ENCODE measurements at regions of chr1 and their contacts with region 1.

Region 1: DNA sequence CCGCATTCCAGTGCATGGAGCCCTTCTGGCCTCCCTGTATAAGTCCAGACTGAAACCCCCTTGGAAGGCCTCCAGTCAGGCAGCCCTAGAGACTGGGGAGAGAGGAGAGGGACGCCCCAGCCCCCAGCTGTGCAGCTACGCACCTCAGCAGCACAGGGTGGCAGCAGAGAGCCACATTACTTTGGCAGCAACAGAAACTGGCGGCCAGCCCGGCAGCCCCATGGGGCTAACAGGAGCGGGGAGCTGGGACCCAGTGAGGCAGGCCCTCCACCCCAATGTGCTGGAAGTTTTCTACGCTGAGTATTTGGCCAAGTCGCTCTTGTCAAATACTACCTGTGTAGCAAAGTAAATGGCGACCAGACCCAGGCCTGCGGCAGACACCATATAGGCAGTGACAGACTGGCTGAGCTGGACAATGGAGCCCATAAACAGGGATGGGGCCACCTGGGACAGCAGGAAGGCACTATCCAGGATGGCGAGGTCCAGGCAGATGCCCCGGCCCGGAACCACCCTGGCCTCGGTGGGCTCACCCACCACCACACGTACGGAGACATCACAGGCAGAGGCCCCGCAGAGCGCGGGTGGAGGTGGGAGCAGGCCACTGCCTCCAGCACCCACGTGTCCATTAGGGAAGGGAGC is 21.2 kb downstream of the SLC45A3 start:
- DNase-seq: no peak
- H3K4me3 ChIP-seq: no peak overlapping the region
- CTCF ChIP-seq: peak; percentile 93

Region 2: GRCh38 chr1:205528887-205529825 is 129.9 kb before region 1 on chr1:
- CTCF ChIA-PET with region 1: interaction called, 331 read pairs
- POLR2A ChIA-PET with region 1: no interaction called
- DNase-seq: no peak
- H3K4me3 ChIP-seq: peak overlapping the region; percentile 45
- CTCF ChIP-seq: peak; percentile 93

Region 3: GRCh38 chr1:205600085-205600484 is 59.0 kb before region 1 on chr1:
- CTCF ChIA-PET with region 1: interaction called, 741 read pairs
- POLR2A ChIA-PET with region 1: interaction called, 3 read pairs
- DNase-seq: no peak
- H3K4me3 ChIP-seq: no peak overlapping the region
- CTCF ChIP-seq: no peak

Region 4: DNA sequence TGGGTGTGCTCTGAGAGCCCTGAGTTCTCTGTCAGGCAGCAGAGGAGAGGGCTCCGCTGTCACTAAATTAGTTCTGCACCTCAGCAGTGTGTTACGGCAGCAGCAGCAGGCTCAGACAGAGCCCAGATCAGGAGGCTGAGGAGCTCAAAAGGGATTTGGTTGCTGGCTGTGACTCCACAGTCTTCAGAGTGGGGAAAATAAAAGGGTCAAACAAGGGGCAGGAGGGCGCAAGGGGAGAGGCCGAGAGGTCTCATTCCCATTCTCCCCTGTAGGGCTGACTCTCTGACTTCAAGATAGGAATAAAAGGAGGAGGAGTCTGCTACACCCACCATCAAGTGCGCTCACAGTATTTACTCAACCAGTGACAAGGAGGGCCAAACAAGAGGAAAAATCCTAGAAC is 30.4 kb after region 1 on chr1:
- CTCF ChIA-PET with region 1: interaction called, 24 read pairs
- POLR2A ChIA-PET with region 1: no interaction called
- DNase-seq: no peak
- H3K4me3 ChIP-seq: no peak overlapping the region
- CTCF ChIP-seq: no peak

Region 5: GRCh38 chr1:205739348-205740160 is 80.5 kb after region 1 on chr1:
- CTCF ChIA-PET with region 1: interaction called, 14 read pairs
- POLR2A ChIA-PET with region 1: no interaction called
- DNase-seq: peak; percentile 62
- H3K4me3 ChIP-seq: no peak overlapping the region
- CTCF ChIP-seq: peak; percentile 14

Region 6: DNA sequence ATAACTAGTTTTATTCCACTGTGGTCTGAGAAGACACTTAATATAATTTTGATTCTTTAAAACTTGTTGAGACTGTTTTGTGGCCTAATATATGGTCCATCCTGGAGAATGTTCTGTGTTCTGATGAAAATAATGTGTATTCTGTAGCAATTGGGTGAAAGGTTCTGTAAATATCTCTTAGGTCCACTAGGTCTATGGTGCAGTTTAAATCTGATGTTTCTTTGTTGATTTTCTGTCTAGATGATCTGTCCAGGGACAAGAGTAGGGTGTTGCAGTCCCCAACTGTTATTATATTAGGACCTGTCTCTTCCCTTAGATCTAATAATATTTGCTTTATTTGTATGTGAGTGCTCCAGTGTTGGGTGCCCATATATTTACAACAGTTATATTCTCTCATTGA is 224.7 kb after region 1 on chr1:
- CTCF ChIA-PET with region 1: no interaction called
- POLR2A ChIA-PET with region 1: no interaction called
- DNase-seq: no peak
- H3K4me3 ChIP-seq: no peak overlapping the region
- CTCF ChIP-seq: no peak

Region 7: GRCh38 chr1:205919026-205919746 is 260.1 kb after region 1 on chr1:
- CTCF ChIA-PET with region 1: interaction called, 22 read pairs
- POLR2A ChIA-PET with region 1: no interaction called
- DNase-seq: peak; percentile 63
- H3K4me3 ChIP-seq: no peak overlapping the region
- CTCF ChIP-seq: peak; percentile 89

Measured in AG04449 (cell line).